A673 (cell line): ENCODE measurements at regions of chr12 and their contacts with region 1.

Region 1: DNA sequence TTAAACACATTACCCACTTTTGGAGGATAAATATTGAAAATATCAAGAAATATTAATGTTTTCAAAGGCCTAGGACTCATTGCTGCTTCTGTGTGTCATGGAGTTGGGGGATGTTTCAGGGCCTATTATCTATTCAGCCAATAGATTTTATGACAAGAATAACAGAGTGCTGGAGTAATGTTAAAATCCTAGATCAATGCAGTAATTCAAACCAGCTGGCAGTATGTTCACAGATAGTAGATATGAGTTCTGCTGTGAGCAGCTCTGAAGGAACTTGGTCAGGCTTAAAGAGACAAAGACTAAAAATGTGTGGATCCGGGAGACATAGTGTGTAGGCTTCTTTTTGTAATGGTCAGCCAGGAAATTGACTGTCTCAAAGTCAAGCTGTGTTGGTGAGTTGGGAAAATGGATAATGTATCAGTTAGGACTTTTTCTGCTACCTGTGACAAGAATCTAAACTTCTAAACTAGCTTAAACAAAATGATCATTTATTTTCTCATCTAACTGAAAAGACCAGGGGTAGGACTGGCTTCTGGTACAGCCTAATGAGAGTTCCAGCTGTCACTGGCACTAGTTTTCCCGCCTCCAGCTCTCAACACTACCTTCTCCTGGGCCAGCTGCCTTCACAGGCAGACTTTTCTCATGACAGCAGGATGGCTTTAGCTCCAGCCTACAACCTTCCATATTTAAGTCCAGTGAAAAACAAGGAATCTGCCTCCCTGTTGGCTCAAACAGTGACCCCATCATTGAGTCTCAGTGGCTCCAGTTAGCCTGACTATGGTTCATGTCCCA is 16.3 kb upstream of the POLR3B start:
- DNase-seq: no peak
- H3K4me3 ChIP-seq: no peak overlapping the region
- H3K27ac ChIP-seq: no peak overlapping the region
- H3K4me1 ChIP-seq: no peaks in the 10 kb centered on the region
- H3K27me3 ChIP-seq: no peaks in the 10 kb centered on the region
- CTCF ChIP-seq: no peak

Region 2: DNA sequence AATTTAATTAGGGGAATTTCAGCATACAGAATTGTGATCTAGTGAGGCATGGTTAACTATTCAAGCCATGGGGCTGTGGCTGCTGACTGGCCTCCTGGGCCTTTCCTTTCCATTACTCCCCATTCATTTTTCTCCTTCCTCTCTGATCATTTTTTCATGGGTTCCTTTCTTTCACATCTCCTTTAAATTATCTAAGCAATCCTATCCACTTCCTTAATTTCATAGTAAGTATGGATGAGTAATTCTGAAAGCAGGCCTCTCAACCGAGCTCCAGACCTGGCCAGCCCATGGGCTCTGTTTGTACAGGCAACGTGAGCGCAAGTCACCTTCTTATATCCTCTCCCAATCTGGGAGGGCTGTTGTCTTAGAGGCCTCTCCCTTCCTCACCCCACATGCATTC is 106.8 kb before region 1 on chr12:
- CTCF ChIA-PET with region 1: interaction called, 11 read pairs
- POLR2A ChIA-PET with region 1: no interaction called
- intact Hi-C with region 1: no loop called
- DNase-seq: no peak
- H3K4me3 ChIP-seq: no peak overlapping the region
- H3K27ac ChIP-seq: no peak overlapping the region
- H3K4me1 ChIP-seq: no peaks in the 10 kb centered on the region
- H3K27me3 ChIP-seq: no peaks in the 10 kb centered on the region
- CTCF ChIP-seq: no peak